AG04449 (cell line): ENCODE measurements at regions of chr14 and their contacts with region 1.

Region 1: GRCh38 chr14:53055003-53055402 is 98.1 kb downstream of the DDHD1 start:
- DNase-seq: no peak
- H3K4me3 ChIP-seq: no peak overlapping the region
- CTCF ChIP-seq: peak; percentile 49

Region 2: GRCh38 chr14:52663850-52664249 is 391.2 kb before region 1 on chr14:
- CTCF ChIA-PET with region 1: no interaction called
- POLR2A ChIA-PET with region 1: no interaction called
- DNase-seq: no peak
- H3K4me3 ChIP-seq: no peak overlapping the region
- CTCF ChIP-seq: no peak

Region 3: GRCh38 chr14:52824507-52824906 is 230.5 kb before region 1 on chr14:
- CTCF ChIA-PET with region 1: interaction called, 60 read pairs
- POLR2A ChIA-PET with region 1: no interaction called
- DNase-seq: no peak
- H3K4me3 ChIP-seq: no peak overlapping the region
- CTCF ChIP-seq: no peak

Region 4: DNA sequence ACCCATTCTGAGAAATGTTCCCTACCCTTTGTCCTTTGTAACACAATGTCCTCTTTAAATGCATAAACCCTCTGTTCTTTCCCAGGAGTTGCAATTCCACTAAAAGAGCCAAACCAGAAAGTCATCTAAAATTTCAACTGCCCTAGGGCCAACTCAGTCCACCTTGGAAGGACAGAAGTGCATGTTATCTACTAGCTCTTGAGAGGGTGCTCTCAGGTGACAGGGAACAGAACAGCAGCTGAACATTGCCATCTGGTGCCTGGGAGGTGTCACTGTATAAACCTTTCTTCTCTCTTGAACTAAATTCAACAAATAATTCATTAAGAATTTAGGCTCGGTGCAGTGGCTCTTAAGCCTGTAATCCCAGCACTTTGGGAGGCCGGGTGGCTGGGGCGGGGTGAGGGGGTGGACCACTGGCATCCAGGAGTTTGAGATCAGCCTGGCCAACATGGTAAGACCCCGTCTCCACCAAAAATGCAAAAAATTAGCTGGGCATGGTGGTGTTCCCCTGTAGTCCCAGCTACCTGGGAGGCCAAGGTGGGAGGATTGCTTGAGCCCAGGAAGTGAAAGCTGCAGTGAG is 93.9 kb before region 1 on chr14:
- CTCF ChIA-PET with region 1: interaction called, 18 read pairs
- POLR2A ChIA-PET with region 1: no interaction called
- DNase-seq: no peak
- H3K4me3 ChIP-seq: no peak overlapping the region
- CTCF ChIP-seq: peak; percentile 48

Region 5: DNA sequence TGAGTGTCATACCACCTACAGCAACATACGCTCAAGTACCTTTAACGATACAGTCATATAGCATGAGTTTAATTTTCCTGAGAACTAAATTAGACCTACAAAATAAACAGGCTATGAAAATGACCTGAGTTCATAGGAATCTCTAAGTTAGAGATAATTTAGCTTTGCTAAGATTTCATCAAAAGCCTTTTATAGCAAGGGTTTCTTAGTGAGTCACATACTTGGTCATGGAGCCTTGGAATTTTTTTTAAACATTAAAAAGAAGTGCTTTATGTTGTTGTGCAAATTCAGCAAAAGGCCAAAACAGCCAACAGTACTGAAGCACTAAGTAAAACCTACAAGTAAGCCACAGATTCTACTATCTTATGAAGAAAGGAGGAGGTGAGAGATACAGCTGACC is 10.5 kb before region 1 on chr14:
- CTCF ChIA-PET with region 1: interaction called, 24 read pairs
- POLR2A ChIA-PET with region 1: no interaction called
- DNase-seq: peak; percentile 73
- H3K4me3 ChIP-seq: no peak overlapping the region
- CTCF ChIP-seq: no peak

Region 6: DNA sequence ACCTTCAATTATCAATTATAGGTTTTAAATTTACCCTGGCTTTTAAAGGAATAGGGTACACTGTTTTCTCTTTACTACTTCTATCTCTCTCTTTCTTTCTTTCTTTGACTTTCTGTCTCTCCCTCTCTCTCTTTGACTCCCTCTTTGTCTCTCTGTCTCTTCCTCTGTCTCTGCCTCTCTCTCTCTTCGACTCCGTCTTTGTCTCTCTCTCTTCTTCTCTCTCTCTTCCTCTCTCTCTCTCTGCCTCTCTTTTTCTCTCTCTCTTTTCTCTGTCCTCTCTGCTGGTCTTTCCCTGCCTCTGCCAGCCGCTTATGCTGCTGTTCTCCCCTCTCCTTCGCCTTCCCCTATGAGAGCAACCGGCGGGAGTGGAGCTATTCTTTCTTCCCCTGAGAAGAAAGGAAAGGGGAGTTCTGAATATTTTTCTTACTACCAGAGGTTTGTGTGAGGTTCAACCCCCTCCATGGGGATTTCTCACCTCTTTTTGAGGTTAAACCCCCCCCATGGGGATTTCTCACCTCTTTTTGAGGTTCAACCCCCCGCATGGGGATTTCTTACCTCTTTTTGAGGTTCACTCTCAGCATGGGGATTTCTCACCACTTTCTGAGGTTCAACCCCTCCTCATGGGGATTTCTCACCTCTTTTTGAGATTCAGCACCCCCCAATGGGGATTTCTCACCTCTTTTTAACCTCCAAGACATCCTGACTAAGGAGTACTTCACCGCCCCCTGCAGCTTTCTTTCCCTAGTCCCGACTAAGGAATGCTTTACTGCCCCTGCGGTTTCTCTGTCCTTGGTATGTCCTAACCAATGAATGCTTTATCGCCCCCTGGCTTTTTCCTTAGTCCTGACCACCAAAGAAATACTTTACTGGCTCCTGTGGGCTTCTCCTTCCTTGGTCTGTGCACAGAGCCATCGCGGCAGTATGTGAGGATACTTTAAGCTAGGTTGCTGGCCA is 125.5 kb after region 1 on chr14:
- CTCF ChIA-PET with region 1: no interaction called
- POLR2A ChIA-PET with region 1: no interaction called
- DNase-seq: no peak
- H3K4me3 ChIP-seq: no peak overlapping the region
- CTCF ChIP-seq: no peak

Region 7: GRCh38 chr14:53306267-53306721 is 251.3 kb after region 1 on chr14:
- CTCF ChIA-PET with region 1: interaction called, 18 read pairs
- POLR2A ChIA-PET with region 1: no interaction called
- DNase-seq: no peak
- H3K4me3 ChIP-seq: peak overlapping the region; percentile 51
- CTCF ChIP-seq: peak; percentile 61